Left ventricle myocardium inferior (tissue), 1 donor: ENCODE measurements at regions of chr3 and their contacts with region 1.

Region 1: DNA sequence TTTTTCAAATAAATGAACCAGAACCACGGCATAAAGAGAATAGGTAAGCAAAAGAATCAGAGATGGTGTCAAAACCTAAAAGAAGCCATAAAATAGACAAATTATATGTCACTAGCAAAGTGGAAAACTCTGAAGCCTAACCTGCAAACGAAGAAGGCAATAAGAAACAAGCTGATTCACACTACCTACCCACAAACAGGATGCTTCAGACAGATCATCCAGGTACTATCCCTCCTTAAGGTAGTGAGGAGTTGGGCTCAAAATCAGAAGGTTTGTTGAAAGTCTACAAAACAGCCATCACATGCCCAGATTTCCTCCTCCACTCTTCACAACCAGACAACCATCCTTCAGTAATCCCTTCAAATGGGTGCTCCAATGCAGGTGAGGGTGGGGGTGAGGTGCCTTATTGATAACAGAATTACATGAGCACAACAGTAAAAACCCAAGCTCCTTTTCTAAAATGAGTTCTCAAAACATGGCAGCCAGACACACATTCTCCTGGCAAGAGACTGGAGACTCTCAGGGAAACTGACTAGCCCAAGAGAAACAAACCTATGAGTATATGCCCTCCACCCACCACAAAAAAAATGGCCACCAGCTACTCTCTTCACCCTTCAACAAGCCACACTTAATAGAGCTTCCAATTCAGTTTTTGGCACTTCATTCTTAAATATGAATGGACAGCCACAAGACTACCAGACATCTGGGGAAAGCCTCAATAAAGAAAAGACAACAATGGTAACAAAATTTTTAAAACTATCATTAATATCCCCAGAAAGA is 6.4 kb downstream of the KPNA1 start:
- DNase-seq: no peak
- H3K4me3 ChIP-seq: no peak overlapping the region
- H3K27ac ChIP-seq: no peak overlapping the region
- H3K4me1 ChIP-seq: peaks cover 76% of the 10 kb centered on the region
- H3K27me3 ChIP-seq: no peaks in the 10 kb centered on the region
- CTCF ChIP-seq: no peak

Region 2: GRCh38 chr3:122392868-122393844 is 115.2 kb before region 1 on chr3:
- intact Hi-C with region 1: loop called (anchors 10 kb)
- DNase-seq: no peak
- H3K4me3 ChIP-seq: no peak overlapping the region
- H3K27ac ChIP-seq: peak overlapping the region; percentile 66
- H3K4me1 ChIP-seq: peaks cover 43% of the 10 kb centered on the region
- H3K27me3 ChIP-seq: no peaks in the 10 kb centered on the region
- CTCF ChIP-seq: peak; percentile 75

Region 3: GRCh38 chr3:122745346-122746021 is 237.2 kb after region 1 on chr3:
- intact Hi-C with region 1: no loop called
- DNase-seq: no peak
- H3K4me3 ChIP-seq: no peak overlapping the region
- H3K27ac ChIP-seq: no peak overlapping the region
- H3K4me1 ChIP-seq: no peaks in the 10 kb centered on the region
- H3K27me3 ChIP-seq: no peaks in the 10 kb centered on the region
- CTCF ChIP-seq: no peak

Region 4: GRCh38 chr3:123036352-123037014 is 528.2 kb after region 1 on chr3:
- intact Hi-C with region 1: no loop called
- DNase-seq: no peak
- H3K4me3 ChIP-seq: no peak overlapping the region
- H3K27ac ChIP-seq: no peak overlapping the region
- H3K4me1 ChIP-seq: peaks cover 8% of the 10 kb centered on the region
- H3K27me3 ChIP-seq: no peaks in the 10 kb centered on the region
- CTCF ChIP-seq: no peak